ENCODE measurements at regions of chr12 and their contacts with region 1.

Region 1: DNA sequence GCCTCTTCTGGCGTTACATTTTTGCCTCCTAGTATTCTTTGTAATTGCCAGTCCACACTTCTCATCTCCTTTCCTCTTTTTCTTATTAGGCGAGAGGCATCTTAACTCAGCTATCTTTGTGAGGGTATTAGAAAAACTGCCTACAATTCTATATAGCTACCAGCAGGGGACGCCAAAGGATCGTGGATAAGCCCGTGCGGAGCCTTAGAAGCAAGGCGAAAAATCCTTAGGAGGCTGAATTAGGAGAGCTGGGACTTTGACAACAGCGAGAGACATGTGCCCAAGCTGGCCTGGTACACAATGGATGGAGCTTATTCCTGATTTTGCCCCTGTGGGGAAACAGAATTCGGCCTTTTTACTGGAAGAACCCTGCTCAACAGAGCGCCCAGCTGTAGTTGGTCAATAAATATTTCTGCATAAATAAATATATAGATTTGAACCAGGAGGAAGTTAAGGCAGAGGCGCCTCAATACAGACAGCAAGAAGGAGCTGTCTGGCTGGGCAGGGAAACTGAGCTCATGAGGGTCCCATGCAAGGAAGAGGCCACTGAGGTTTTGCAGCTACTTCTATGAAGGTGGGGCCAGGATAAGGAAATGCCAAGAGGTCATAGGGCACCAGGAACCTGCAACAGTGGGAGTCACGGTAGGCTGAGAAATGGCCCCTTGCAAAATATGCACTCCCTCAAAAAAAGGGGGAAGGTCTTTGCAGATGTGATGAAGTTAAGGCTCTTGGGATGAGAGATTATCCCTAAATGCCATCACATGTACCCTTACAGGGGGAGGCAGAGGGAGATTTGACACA is 14.6 kb upstream of the RBM19 start:
- DNase-seq: peak; percentile 26
- H3K4me3 ChIP-seq: no peak overlapping the region
- CTCF ChIP-seq: peak; percentile 86

Region 2: GRCh38 chr12:113996026-113996425 is 15.3 kb after region 1 on chr12:
- CTCF ChIA-PET with region 1: interaction called, 15 read pairs
- POLR2A ChIA-PET with region 1: no interaction called
- DNase-seq: no peak
- H3K4me3 ChIP-seq: no peak overlapping the region
- CTCF ChIP-seq: peak; percentile 1

Region 3: DNA sequence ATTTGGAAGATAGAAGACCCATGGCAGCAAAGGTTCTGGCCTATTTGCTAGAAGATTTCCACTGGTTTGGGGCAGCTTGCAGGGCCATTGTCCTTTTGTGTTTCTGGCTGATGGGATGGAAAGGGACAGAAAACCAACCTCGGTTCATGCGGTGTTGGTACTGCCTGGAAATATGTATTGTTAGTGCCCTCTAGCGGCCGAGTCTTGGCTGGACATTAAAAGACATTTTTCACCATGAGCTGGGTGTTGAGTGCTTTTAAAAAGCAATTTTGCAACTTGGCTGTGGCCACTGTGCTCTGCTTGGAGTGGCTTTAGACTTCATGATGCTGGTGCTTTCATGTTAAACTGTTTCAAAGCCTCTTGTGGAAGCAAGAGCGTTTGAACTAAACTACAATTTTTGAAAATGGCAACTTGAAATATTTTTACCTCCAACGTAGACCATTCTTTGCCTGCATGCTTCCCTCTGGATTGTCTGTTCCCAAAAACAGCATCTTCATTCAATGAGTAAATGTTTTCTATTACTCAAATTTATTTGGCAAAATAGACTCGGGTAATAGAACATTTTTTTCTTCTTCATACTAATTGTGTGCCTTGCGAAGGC is 527.9 kb after region 1 on chr12:
- CTCF ChIA-PET with region 1: interaction called, 128 read pairs
- POLR2A ChIA-PET with region 1: no interaction called
- DNase-seq: peak; percentile 16
- H3K4me3 ChIP-seq: no peak overlapping the region
- CTCF ChIP-seq: peak; percentile 66

Region 4: GRCh38 chr12:114636723-114637483 is 656.2 kb after region 1 on chr12:
- CTCF ChIA-PET with region 1: interaction called, 60 read pairs
- POLR2A ChIA-PET with region 1: no interaction called
- DNase-seq: no peak
- H3K4me3 ChIP-seq: no peak overlapping the region
- CTCF ChIP-seq: peak; percentile 39